ENCODE measurements at regions of chr1 and their contacts with region 1.

Region 1: GRCh38 chr1:213303286-213303685 is 252.2 kb downstream of the RPS6KC1 start:
- DNase-seq: no peak

Region 2: GRCh38 chr1:212959266-212960220 is 343.7 kb before region 1 on chr1:
- intact Hi-C with region 1: no loop called
- DNase-seq: peak; percentile 73

Region 3: GRCh38 chr1:213315571-213315970 is 12.3 kb after region 1 on chr1:
- intact Hi-C with region 1: loop called in 1 of 2 experiments (anchors 1 kb)
- DNase-seq: no peak